ENCODE measurements at regions of chr6 and their contacts with region 1.

Region 1: GRCh38 chr6:123415844-123416468 is 220.8 kb downstream of the TRDN start:
- DNase-seq: peak in 38 of 42 donors; percentile 21 to 89 (median 69)

Region 2: GRCh38 chr6:123715006-123715875 is 299.3 kb after region 1 on chr6:
- intact Hi-C with region 1: loop called (anchors 10 kb)
- DNase-seq: peak in 7 of 42 donors; percentile 4 to 46 (median 13)

Region 3: DNA sequence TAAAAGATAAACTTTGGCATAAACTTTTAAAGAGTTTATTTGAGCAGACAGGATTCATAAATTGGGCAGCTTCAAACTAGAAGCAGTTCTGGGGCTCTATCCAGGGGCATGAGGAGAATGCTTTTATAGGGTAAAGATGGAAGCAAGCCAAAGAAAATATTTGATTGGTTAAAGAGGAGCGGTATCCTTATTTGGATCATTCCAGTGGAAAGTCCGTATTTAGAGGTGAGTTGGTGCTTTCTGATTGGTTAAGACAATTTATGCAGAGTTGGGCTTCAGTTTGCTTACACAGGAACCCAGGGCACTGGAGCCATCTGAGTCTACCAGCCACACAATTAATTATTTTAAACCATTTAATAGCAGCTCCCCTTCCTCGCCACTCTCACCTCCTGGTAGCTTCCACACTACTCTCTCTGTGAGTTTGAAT is 1508.4 kb after region 1 on chr6:
- intact Hi-C with region 1: no loop called
- DNase-seq: no peak

Region 4: DNA sequence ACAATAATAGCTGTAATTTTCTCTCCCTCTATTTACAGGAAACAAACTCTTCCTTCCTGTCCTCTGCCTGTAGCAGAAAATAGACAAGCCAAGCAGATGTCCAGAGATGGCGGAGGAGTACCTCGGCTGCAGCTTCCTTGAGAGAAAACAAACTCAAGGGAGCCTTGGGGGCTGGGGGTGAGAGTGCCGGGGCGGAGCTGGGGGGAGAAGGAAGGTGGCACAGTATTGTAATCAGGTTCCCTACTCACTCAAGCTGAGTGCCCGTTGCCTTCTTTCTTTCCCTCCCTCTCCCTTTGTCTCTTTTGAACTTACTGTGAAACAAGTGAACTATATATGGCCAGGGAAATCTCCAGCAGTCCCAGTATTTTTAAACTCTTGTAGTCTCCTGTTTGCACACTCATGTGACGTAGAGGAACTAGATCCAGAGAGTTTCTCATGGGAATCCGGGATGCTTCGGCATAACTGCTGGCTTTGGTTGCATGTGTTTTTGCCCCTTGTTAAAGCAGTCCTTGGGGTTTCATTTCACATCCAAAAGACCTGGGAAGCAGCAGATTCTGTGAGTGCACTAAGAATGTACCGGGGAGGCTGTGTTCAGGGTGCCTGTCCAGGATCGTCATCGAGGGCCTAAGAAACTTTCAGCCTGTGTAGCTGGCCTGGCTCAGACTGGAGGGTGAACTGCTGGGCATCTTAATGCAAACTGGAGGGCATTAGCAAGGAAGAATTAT is 1930.4 kb after region 1 on chr6:
- intact Hi-C with region 1: no loop called
- DNase-seq: no peak

Measured in head of caudate nucleus (tissue), 42 donors.